ENCODE measurements at regions of chr4 and their contacts with region 1.

Region 1: GRCh38 chr4:16225863-16226815 is at the start of gene TAPT1:
- DNase-seq: peak; percentile 38 to 87 (median 75)
- ATAC-seq: peak; percentile 69
- H3K4me3 ChIP-seq: peak within 1 kb of the TSS; percentile 67 to 71
- H3K4me3 Mint-ChIP-seq: peak within 1 kb of the TSS; percentile 94
- H3K27ac ChIP-seq: peak within 1 kb of the TSS; percentile 65 to 75
- H3K27ac Mint-ChIP-seq: peak within 1 kb of the TSS; percentile 97
- H3K4me1 ChIP-seq: peaks cover 39% of the 10 kb centered on the region
- H3K4me1 Mint-ChIP-seq: peaks cover 60% of the 10 kb centered on the region
- H3K27me3 ChIP-seq: no peaks in the 10 kb centered on the region
- H3K27me3 Mint-ChIP-seq: no peaks in the 10 kb centered on the region
- CTCF ChIP-seq: no peak
- total RNA-seq, gene TAPT1: 79.8 to 95.0 TPM

Region 2: GRCh38 chr4:15655229-15656037 is 570.7 kb before region 1 on chr4 and contains the start of gene FBXL5:
- CTCF ChIA-PET with region 1: no interaction called
- POLR2A ChIA-PET with region 1: interaction called, 4 read pairs
- intact Hi-C with region 1: loop called (anchors 1 to 5 kb)
- DNase-seq: peak; percentile 66 to 95 (median 80)
- ATAC-seq: peak; percentile 79
- H3K4me3 ChIP-seq: peak within 1 kb of the TSS; percentile 67 to 85
- H3K4me3 Mint-ChIP-seq: peak within 1 kb of the TSS; percentile 98
- H3K27ac ChIP-seq: peak within 1 kb of the TSS; percentile 88 to 92
- H3K27ac Mint-ChIP-seq: peak within 1 kb of the TSS; percentile 97
- H3K4me1 ChIP-seq: peaks cover 51% of the 10 kb centered on the region
- H3K4me1 Mint-ChIP-seq: peaks cover 46% of the 10 kb centered on the region
- H3K27me3 ChIP-seq: no peaks in the 10 kb centered on the region
- H3K27me3 Mint-ChIP-seq: no peaks in the 10 kb centered on the region
- CTCF ChIP-seq: no peak
- total RNA-seq, gene FBXL5: 60.4 to 61.7 TPM

Region 3: DNA sequence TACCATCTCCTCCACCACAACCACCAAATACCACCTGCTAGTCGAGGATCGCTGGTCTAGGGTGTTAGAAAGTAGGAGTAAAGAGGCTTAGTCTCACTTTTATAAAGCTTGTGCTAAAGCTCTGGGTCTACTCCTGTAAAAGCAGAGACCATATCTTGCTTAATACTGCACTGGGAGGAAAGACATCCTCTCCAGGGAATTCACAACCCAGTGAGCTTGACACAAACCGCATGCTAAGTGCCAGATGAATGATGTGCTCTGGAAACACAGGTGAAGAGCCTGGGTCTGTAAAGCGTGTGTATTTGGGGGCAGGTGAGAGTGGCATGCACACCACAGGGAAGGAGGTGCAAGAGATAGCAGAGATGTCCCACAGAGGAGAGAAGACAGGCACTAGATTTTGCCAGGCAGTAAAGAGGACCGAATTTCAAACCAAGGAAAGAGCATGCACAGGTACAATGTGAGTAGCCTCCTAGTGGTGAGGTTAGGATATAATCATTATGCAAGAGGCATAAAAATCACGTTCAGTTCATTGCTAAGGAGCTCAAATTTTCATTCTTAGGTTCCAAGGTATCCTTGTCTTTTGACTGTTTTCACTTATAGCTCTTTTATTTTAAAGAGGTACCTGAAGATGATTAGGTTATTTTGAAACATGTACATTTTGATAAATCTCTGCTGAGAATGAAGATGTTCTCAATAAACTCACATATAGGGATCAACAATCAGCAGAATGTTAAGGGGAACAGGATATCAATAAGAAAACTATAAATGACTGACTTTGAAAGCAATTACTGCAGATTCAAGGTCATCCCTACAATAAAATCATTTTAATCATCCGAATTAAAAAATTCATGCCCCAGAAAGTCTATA is 20.6 kb before region 1 on chr4:
- CTCF ChIA-PET with region 1: interaction called, 5 read pairs
- POLR2A ChIA-PET with region 1: interaction called, 3 read pairs
- intact Hi-C with region 1: loop called in 1 of 2 experiments (anchors 2 kb)
- DNase-seq: peak in 2 of 9 experiments; percentile 33 to 56
- ATAC-seq: peak; percentile 92
- H3K4me3 ChIP-seq: no peak overlapping the region
- H3K4me3 Mint-ChIP-seq: no peak overlapping the region
- H3K27ac ChIP-seq: no peak overlapping the region
- H3K27ac Mint-ChIP-seq: peak overlapping the region; percentile 46
- H3K4me1 ChIP-seq: peaks cover 17% of the 10 kb centered on the region
- H3K4me1 Mint-ChIP-seq: peaks cover 38% of the 10 kb centered on the region
- H3K27me3 ChIP-seq: no peaks in the 10 kb centered on the region
- H3K27me3 Mint-ChIP-seq: no peaks in the 10 kb centered on the region
- CTCF ChIP-seq: peak; percentile 70

Region 4: DNA sequence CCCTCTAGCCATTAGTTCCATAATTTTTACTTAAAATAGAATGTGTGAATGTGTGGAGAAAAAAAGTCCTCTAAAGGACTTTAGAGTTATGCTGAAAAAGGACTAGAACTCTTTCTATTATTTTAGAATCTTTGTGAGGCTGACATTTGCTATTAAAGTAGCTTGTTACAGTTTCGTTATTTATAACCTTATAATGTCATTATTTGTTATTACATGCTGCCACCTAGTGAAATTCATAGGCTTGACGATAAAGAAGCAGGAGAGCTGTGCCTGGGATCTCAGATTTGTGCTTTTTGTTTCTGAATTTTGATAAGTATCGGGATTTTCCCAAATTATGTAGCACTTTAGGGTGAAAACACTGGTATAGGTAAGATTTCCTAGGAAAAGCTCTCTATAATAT is 38.7 kb after region 1 on chr4:
- CTCF ChIA-PET with region 1: interaction called, 4 read pairs
- POLR2A ChIA-PET with region 1: no interaction called
- intact Hi-C with region 1: loop called in 1 of 2 experiments (anchors 5 kb)
- DNase-seq: peak in 2 of 9 experiments; percentile 50 to 63
- ATAC-seq: no peak
- H3K4me3 ChIP-seq: no peak overlapping the region
- H3K4me3 Mint-ChIP-seq: no peak overlapping the region
- H3K27ac ChIP-seq: no peak overlapping the region
- H3K27ac Mint-ChIP-seq: no peak overlapping the region
- H3K4me1 ChIP-seq: no peaks in the 10 kb centered on the region
- H3K4me1 Mint-ChIP-seq: peaks cover 6% of the 10 kb centered on the region
- H3K27me3 ChIP-seq: no peaks in the 10 kb centered on the region
- H3K27me3 Mint-ChIP-seq: no peaks in the 10 kb centered on the region
- CTCF ChIP-seq: peak; percentile 69

Region 5: DNA sequence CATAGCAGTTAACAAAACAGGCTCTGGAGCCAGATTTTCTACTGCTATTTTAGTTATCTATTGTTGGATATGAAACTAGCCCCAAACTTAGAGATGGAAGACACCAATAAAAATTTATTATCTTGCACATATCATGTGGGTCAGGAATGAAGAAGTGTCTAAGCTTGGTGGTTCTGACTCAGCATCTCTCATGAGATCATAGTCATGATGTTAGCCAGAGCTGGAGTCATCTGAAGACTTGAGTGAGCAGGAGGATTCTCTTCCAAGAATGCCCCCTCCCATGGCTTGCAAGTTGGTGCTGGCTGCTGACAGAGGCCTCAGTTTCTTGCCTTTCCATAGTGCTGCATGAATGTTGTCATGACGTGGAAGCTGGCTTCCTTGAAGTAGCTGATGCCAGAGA is 68.3 kb after region 1 on chr4:
- CTCF ChIA-PET with region 1: no interaction called
- POLR2A ChIA-PET with region 1: no interaction called
- intact Hi-C with region 1: no loop called
- DNase-seq: no peak
- ATAC-seq: no peak
- H3K4me3 ChIP-seq: no peak overlapping the region
- H3K4me3 Mint-ChIP-seq: no peak overlapping the region
- H3K27ac ChIP-seq: no peak overlapping the region
- H3K27ac Mint-ChIP-seq: no peak overlapping the region
- H3K4me1 ChIP-seq: no peaks in the 10 kb centered on the region
- H3K4me1 Mint-ChIP-seq: peaks cover 4% of the 10 kb centered on the region
- H3K27me3 ChIP-seq: no peaks in the 10 kb centered on the region
- H3K27me3 Mint-ChIP-seq: peaks cover 13% of the 10 kb centered on the region
- CTCF ChIP-seq: no peak

Region 6: DNA sequence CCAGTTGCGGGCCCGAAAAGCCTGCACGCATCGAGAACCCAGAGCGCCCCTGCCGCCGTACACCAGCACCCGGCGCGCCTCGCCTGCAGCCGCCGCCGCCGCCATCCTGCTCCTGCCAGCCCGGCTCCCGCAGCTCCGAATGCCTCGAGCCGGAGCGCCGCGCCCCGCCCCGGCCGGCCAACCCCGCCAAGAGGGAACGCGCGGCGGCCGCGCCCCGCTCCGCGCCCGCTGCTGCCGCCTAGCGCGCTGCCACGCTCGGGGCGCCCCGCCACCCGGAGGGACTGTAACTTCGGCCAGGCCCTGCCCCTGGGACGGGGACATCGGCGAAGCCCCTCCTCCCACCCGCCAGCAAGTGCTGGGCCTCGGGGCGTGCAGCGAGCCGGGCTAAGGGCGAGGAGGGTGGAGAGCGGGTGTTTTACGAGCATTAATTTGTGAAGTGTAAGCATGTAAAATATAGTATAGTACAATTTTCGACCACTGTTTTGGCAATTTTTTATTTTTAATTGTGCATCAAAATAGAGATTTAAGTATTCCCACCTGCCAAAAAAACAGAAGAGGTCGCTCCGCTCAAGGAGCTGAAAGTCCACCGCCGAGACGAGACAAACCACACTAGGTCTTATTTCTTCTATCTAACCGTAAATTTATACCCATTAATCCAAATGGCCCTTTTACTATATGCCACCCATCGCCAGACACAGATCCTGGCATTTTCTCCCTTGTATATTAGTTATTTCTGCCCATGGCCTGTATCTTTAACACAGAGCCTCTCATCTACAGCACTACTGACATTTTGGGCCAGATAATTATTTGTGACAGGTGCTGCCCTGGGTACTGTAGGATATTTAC is 1286.0 kb after region 1 on chr4 and contains the start of gene QDPR:
- CTCF ChIA-PET with region 1: no interaction called
- POLR2A ChIA-PET with region 1: no interaction called
- intact Hi-C with region 1: loop called in 1 of 2 experiments (anchors 2 kb)
- DNase-seq: peak; percentile 38 to 86 (median 70)
- ATAC-seq: peak; percentile 91
- H3K4me3 ChIP-seq: peak within 1 kb of the TSS; percentile 63 to 80
- H3K4me3 Mint-ChIP-seq: peak within 1 kb of the TSS; percentile 99
- H3K27ac ChIP-seq: peak within 1 kb of the TSS; percentile 49 to 57
- H3K27ac Mint-ChIP-seq: peak within 1 kb of the TSS; percentile 93
- H3K4me1 ChIP-seq: peaks cover 18% of the 10 kb centered on the region
- H3K4me1 Mint-ChIP-seq: peaks cover 33% of the 10 kb centered on the region
- H3K27me3 ChIP-seq: no peaks in the 10 kb centered on the region
- H3K27me3 Mint-ChIP-seq: peaks cover 6% of the 10 kb centered on the region
- CTCF ChIP-seq: peak; percentile 30
- total RNA-seq, gene QDPR: 10.9 to 11.6 TPM

Region 7: GRCh38 chr4:17614416-17615299 is 1388.5 kb after region 1 on chr4 and contains the start of gene MED28:
- CTCF ChIA-PET with region 1: no interaction called
- POLR2A ChIA-PET with region 1: no interaction called
- intact Hi-C with region 1: loop called in 1 of 2 experiments (anchors 5 kb)
- DNase-seq: peak; percentile 84 to 98 (median 95)
- ATAC-seq: peak; percentile 89
- H3K4me3 ChIP-seq: peak within 1 kb of the TSS; percentile 95 to 99
- H3K4me3 Mint-ChIP-seq: peak within 1 kb of the TSS; percentile 99
- H3K27ac ChIP-seq: peak within 1 kb of the TSS; percentile 87 to 92
- H3K27ac Mint-ChIP-seq: peak within 1 kb of the TSS; percentile 97
- H3K4me1 ChIP-seq: peaks cover 41% of the 10 kb centered on the region
- H3K4me1 Mint-ChIP-seq: peaks cover 41% of the 10 kb centered on the region
- H3K27me3 ChIP-seq: no peaks in the 10 kb centered on the region
- H3K27me3 Mint-ChIP-seq: no peaks in the 10 kb centered on the region
- CTCF ChIP-seq: no peak
- total RNA-seq, gene MED28: 60.0 to 64.8 TPM

Region 8: DNA sequence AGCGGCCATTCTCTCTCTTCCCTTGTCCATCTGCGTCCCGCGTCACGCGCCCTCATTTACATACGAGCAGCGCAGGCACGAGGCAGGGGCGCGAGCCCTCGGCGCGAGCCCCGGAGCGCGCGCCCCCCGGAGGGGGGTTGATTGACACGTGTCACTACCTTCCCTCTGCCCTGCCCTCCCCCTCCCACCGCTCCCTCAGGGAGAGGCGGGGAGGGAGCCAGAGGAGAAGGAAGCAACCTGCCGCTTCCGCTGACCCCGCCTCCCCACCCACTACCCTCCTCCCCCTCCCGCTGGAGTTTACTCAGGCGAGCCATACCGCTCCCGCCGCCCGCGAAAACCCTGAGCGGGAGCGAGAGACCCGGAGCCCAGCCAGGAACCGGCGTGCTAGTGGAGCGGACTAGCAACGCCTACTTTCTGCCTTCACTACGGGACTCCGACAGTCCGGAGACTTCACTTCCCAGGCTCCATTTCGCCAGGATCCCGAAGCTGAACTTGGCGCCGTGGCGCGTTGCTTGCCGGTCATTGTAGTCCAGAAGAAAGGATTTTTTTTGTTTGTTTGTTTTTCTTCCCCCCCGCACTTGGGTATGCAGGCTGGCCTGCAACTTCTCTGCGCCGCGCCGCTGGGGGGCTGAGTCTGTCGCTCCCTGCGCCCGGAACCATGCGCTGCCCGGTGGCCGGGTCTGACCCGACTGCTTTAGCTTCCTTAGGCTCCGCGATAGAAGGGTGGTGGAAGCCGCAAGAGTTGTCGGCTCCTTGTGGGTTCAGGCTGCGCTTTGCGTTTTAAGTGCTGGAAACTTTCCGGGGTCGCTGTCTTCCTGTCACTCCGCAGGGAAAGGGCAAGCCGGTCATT is 1795.8 kb after region 1 on chr4 and contains the start of gene LCORL:
- CTCF ChIA-PET with region 1: no interaction called
- POLR2A ChIA-PET with region 1: no interaction called
- intact Hi-C with region 1: loop called (anchors 2 to 5 kb)
- DNase-seq: peak; percentile 75 to 95 (median 86)
- ATAC-seq: peak; percentile 83
- H3K4me3 ChIP-seq: peak within 1 kb of the TSS; percentile 63 to 98
- H3K4me3 Mint-ChIP-seq: peak within 1 kb of the TSS; percentile 95
- H3K27ac ChIP-seq: peak within 1 kb of the TSS; percentile 63 to 80
- H3K27ac Mint-ChIP-seq: peak within 1 kb of the TSS; percentile 89
- H3K4me1 ChIP-seq: peaks cover 18% of the 10 kb centered on the region
- H3K4me1 Mint-ChIP-seq: peaks cover 27% of the 10 kb centered on the region
- H3K27me3 ChIP-seq: no peaks in the 10 kb centered on the region
- H3K27me3 Mint-ChIP-seq: peaks cover 2% of the 10 kb centered on the region
- CTCF ChIP-seq: no peak
- total RNA-seq, gene LCORL: 5.3 to 7.5 TPM

Measured in CD8-positive, alpha-beta T cell (primary cell).